Left cardiac atrium (tissue), 4 donors: ENCODE measurements at regions of chr17 and their contacts with region 1.

Region 1: DNA sequence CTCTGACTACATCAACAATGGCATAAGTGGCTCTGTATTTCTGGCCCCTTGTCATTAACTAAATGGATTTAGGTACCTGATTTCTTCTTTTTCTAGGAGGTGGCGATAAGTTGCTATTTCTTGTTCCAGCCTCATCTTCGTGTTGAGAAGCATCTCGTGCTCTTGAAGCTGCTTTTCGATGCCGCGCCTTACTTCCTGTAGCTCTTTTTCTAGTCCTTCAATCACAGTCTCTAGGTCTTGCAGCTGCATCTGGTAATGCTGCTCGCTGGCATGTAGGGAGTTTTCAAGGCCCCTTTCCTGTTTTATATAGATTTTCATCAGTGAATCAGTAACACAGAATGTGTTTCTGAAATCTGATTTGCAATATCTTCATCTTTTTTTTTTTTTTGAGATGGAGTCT is 5.1 kb downstream of the KRT222 start:
- DNase-seq: no peak
- ATAC-seq: no peak

Region 2: GRCh38 chr17:40779181-40779909 is 119.4 kb after region 1 on chr17:
- intact Hi-C with region 1: loop called in 1 of 2 experiments (anchors 10 kb)
- DNase-seq: no peak
- ATAC-seq: no peak